ENCODE measurements at regions of chr6 and their contacts with region 1.

Region 1: DNA sequence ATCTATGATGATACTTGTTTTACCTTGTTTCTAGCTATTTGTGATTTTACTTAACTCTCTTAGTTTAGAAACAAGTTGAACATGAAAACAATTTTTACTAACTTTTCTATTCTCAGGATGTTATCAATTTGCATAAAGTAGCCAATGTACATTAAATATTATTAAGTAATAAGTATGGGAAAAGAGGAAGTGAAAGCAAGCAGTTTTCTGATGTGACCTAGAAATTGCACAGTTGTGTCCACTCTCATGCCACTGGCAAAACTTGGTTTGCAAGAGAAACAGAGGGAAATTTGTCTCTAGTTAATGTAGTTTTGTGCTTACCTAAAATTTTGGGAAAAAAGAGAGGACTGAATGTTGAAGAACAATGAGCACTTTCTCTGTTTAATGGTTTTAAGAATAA is 19.2 kb upstream of the TSPYL1 start:
- DNase-seq: no peak
- ATAC-seq: no peak
- H3K4me3 ChIP-seq: no peak overlapping the region
- H3K27ac ChIP-seq: no peak overlapping the region
- H3K4me1 ChIP-seq: peaks cover 0 to 14% (median 0%) of the 10 kb centered on the region in 9 donors
- H3K27me3 ChIP-seq: no peaks in the 10 kb centered on the region
- CTCF ChIP-seq: no peak

Region 2: GRCh38 chr6:115667478-115668026 is 631.4 kb before region 1 on chr6:
- intact Hi-C with region 1: no loop called
- DNase-seq: no peak
- ATAC-seq: no peak
- H3K4me3 ChIP-seq: no peak overlapping the region
- H3K27ac ChIP-seq: no peak overlapping the region
- H3K4me1 ChIP-seq: no peaks in the 10 kb centered on the region
- H3K27me3 ChIP-seq: no peaks in the 10 kb centered on the region
- CTCF ChIP-seq: no peak

Region 3: DNA sequence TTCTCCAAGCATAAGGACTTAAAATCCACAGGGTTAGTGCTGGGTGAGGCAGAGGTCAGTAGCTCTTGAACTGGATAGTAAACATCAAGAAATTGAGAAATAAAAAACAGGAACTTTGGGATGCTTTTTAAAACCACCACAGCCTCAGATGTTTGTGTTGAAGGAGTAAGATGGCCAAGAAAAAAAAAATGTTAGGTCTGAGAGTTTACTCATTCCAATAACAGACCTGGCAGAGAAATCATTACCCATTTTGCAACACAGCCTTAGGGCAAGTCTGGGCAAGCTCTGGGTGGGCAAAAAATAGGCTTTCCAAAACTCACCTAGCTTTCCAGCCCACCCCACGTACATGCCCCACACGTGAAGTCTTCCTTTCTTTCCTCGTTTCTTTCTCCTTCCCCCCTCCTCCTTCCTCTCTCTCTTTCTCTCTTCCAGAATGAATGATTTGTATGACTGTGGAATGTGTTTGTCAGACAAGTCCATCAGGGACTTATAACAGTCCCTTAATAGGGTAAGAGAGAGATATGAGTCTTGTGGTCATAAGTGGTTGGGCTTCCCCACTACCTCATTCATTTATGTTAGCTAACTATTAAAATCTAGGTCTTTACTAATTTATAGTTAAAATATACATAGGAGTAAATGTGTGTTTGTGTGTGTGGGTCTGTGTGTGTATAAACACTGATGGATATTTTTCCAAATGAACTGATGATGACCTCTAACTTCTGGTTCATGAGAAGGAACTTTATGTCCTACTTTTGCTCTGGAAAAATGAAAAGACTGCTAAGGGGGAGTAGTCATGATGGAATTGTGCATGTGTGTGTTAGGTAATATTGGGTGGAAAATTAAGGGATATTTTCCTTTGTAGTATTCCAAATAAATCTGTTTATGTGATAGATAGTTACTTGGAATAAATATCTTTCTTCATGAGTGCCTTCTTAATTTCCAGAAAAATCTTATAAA is 53.8 kb after region 1 on chr6:
- intact Hi-C with region 1: no loop called
- DNase-seq: no peak
- ATAC-seq: peak; percentile 44 to 89 (median 74)
- H3K4me3 ChIP-seq: no peak overlapping the region
- H3K27ac ChIP-seq: peak overlapping the region in 8 of 10 donors; percentile 19 to 55 (median 47)
- H3K4me1 ChIP-seq: peaks cover 0 to 27% (median 16%) of the 10 kb centered on the region in 9 donors
- H3K27me3 ChIP-seq: no peaks in the 10 kb centered on the region
- CTCF ChIP-seq: no peak

Region 4: GRCh38 chr6:116371120-116371917 is 72.3 kb after region 1 on chr6:
- intact Hi-C with region 1: loop called in 1 of 10 experiments (anchors 10 kb)
- DNase-seq: peak; percentile 59 to 76
- ATAC-seq: peak; percentile 76 to 88 (median 79)
- H3K4me3 ChIP-seq: peak overlapping the region; percentile 50 to 95 (median 84)
- H3K27ac ChIP-seq: peak overlapping the region; percentile 63 to 96 (median 90)
- H3K4me1 ChIP-seq: peaks cover 0 to 55% (median 18%) of the 10 kb centered on the region in 9 donors
- H3K27me3 ChIP-seq: no peaks in the 10 kb centered on the region
- CTCF ChIP-seq: no peak

Region 5: GRCh38 chr6:116444092-116444491 is 145.1 kb after region 1 on chr6:
- intact Hi-C with region 1: loop called in 3 of 10 experiments (anchors 10 kb)
- DNase-seq: no peak
- ATAC-seq: peak in 1 of 8 donors; percentile 56
- H3K4me3 ChIP-seq: no peak overlapping the region
- H3K27ac ChIP-seq: no peak overlapping the region
- H3K4me1 ChIP-seq: peaks cover 0 to 50% (median 0%) of the 10 kb centered on the region in 9 donors
- H3K27me3 ChIP-seq: no peaks in the 10 kb centered on the region
- CTCF ChIP-seq: peak in 7 of 9 donors; percentile 41 to 61 (median 53)

Measured in heart right ventricle (tissue), 16 donors.